Ascending aorta (tissue), 2 donors: ENCODE measurements at regions of chr9 and their contacts with region 1.

Region 1: GRCh38 chr9:91117959-91118703 is 243.6 kb downstream of the AUH start:
- DNase-seq: peak; percentile 58 to 93
- H3K4me3 ChIP-seq: peak overlapping the region; percentile 37 to 57
- H3K27ac ChIP-seq: peak overlapping the region; percentile 83 to 86
- H3K4me1 ChIP-seq: peaks cover 12 to 29% of the 10 kb centered on the region in 2 donors
- H3K27me3 ChIP-seq: no peaks in the 10 kb centered on the region
- CTCF ChIP-seq: no peak

Region 2: DNA sequence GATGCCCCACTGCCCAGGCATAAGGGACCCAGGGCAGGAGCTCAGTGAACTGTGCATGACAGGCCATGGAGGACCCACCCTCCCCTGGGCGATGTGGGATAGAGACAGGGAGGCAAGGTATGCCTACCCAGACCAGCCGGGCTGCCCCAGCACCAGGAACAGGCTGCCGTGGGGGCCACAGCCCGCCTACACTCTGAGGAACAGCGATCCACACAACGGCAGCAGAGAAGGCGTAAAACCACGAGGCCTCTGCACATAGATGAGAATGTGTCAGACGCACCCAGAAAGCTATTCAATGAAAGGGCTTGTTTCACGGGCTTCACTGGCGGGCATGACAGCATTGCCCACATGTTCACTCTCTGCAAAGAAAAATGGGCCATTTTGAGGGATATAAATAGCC is 1669.8 kb before region 1 on chr9:
- intact Hi-C with region 1: no loop called
- DNase-seq: no peak
- H3K4me3 ChIP-seq: no peak overlapping the region
- H3K27ac ChIP-seq: no peak overlapping the region
- H3K4me1 ChIP-seq: no peaks in the 10 kb centered on the region
- H3K27me3 ChIP-seq: no peaks in the 10 kb centered on the region
- CTCF ChIP-seq: no peak

Region 3: GRCh38 chr9:91101611-91102168 is 16.4 kb before region 1 on chr9:
- intact Hi-C with region 1: loop called (anchors 1 kb)
- DNase-seq: no peak
- H3K4me3 ChIP-seq: no peak overlapping the region
- H3K27ac ChIP-seq: peak overlapping the region; percentile 82 to 85
- H3K4me1 ChIP-seq: peaks cover 8 to 17% of the 10 kb centered on the region in 2 donors
- H3K27me3 ChIP-seq: no peaks in the 10 kb centered on the region
- CTCF ChIP-seq: no peak

Region 4: DNA sequence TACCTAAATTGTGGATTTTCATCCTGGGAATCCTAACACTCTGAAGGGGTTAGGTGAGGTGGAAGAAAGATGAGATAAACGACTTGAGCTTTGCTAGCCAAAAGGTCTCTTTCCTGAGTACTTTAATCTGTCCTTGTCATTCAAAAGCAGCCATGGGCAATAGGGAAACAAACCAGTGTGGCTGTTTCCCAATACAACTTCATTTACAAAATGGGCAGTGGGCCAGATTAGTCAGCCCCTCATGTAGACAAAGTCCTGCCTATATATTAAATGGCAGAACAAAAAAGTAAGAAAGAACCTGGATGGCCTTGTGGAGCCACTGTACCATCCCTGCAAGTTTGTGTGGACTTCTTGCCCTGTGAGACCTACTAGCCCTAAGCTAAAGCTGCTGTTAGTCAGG is 356.5 kb after region 1 on chr9:
- intact Hi-C with region 1: no loop called
- DNase-seq: no peak
- H3K4me3 ChIP-seq: no peak overlapping the region
- H3K27ac ChIP-seq: no peak overlapping the region
- H3K4me1 ChIP-seq: no peaks in the 10 kb centered on the region
- H3K27me3 ChIP-seq: no peaks in the 10 kb centered on the region
- CTCF ChIP-seq: no peak